Mammary epithelial cell (primary cell): ENCODE measurements at regions of chrX and their contacts with region 1.

Region 1: GRCh38 chrX:10636337-10636736 is 16.0 kb upstream of the MID1 start:
- DNase-seq: peak; percentile 46
- H3K4me3 ChIP-seq: no peak overlapping the region
- H3K27ac ChIP-seq: peak overlapping the region; percentile 98
- H3K4me1 ChIP-seq: peaks cover 19% of the 10 kb centered on the region
- H3K27me3 ChIP-seq: no peaks in the 10 kb centered on the region
- CTCF ChIP-seq: peak; percentile 64 to 73

Region 2: DNA sequence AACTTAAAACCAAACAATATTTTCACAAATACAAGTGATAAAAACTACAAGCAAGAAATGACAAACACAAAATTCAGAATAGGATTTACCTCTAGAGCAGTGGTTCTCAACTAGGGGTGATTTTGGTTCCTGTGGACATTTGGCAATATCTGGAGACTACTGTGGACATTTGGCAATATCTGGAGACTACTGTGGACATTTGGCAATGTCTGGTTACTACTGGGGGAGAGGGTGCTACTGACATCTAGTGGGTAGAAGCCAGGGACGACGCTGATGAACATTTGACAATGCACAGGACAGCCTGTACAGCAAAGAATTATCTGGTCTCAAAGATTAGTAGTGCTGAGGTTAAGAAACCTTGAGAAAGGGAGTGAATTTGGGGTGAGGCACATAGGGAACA is 309.8 kb before region 1 on chrX:
- CTCF ChIA-PET with region 1: no interaction called
- dilution Hi-C with region 1: no loop called
- in situ Hi-C with region 1: no loop called
- intact Hi-C with region 1: loop called (anchors 10 kb)
- DNase-seq: no peak
- H3K4me3 ChIP-seq: no peak overlapping the region
- H3K27ac ChIP-seq: no peak overlapping the region
- H3K4me1 ChIP-seq: no peaks in the 10 kb centered on the region
- H3K27me3 ChIP-seq: peaks cover 3% of the 10 kb centered on the region
- CTCF ChIP-seq: no peak

Region 3: GRCh38 chrX:10597871-10598270 is 38.5 kb before region 1 on chrX:
- CTCF ChIA-PET with region 1: no interaction called
- dilution Hi-C with region 1: no loop called
- in situ Hi-C with region 1: no loop called
- intact Hi-C with region 1: loop called (anchors 1 kb)
- DNase-seq: no peak
- H3K4me3 ChIP-seq: no peak overlapping the region
- H3K27ac ChIP-seq: no peak overlapping the region
- H3K4me1 ChIP-seq: no peaks in the 10 kb centered on the region
- H3K27me3 ChIP-seq: no peaks in the 10 kb centered on the region
- CTCF ChIP-seq: peak; percentile 43 to 65

Region 4: DNA sequence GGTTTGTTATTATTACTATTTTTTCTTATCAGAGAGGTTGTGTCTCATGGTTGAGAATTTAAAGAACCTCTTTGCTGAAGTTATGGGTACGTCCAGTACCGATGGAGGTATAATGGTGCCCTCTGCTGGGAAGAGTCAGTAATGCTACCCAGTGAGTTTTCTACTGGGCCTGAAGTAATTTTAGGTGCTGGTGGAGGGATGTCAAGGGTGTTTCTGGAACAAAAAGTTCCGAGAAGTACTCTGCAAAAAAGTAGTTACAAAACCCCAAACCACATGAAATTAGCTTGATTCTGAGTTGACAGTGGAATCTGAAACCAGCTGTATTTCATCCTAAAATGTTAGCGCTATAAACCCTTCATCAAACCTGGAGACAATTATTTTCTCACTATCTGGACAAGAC is 86.5 kb after region 1 on chrX:
- CTCF ChIA-PET with region 1: no interaction called
- dilution Hi-C with region 1: no loop called
- in situ Hi-C with region 1: no loop called
- intact Hi-C with region 1: loop called (anchors 1 kb)
- DNase-seq: peak; percentile 23
- H3K4me3 ChIP-seq: no peak overlapping the region
- H3K27ac ChIP-seq: no peak overlapping the region
- H3K4me1 ChIP-seq: no peaks in the 10 kb centered on the region
- H3K27me3 ChIP-seq: no peaks in the 10 kb centered on the region
- CTCF ChIP-seq: peak; percentile 75 to 83

Region 5: GRCh38 chrX:11100281-11101035 is 464.1 kb after region 1 on chrX:
- CTCF ChIA-PET with region 1: no interaction called
- dilution Hi-C with region 1: no loop called
- in situ Hi-C with region 1: no loop called
- intact Hi-C with region 1: loop called (anchors 1 kb)
- DNase-seq: peak; percentile 61
- H3K4me3 ChIP-seq: no peak overlapping the region
- H3K27ac ChIP-seq: peak overlapping the region; percentile 47
- H3K4me1 ChIP-seq: peaks cover 6% of the 10 kb centered on the region
- H3K27me3 ChIP-seq: no peaks in the 10 kb centered on the region
- CTCF ChIP-seq: peak; percentile 29 to 51